ENCODE measurements at regions of chr2 and their contacts with region 1.

Region 1: DNA sequence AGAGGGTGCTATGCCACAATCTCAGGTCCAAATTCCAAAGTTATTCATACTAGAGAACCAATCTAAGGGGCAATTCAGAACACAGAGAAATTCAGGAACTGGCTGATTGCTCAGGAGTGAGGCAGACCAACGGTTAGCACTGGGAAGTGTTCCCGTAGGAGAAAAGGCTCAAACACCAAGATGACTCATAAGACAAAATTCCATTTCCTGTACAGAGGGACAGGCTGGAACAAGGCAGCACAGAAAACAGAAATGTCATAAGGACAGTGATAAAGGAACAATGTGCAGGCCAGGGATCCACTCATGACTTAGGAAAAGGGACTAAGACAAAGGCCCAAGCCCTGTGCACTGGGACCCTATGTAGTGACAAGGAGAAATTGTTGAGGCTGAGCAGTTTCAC is 54.2 kb downstream of the PDE1A start:
- DNase-seq: no peak
- ATAC-seq: no peak
- H3K4me3 ChIP-seq: no peak overlapping the region
- H3K4me3 Mint-ChIP-seq: no peak overlapping the region
- H3K27ac ChIP-seq: no peak overlapping the region
- H3K27ac Mint-ChIP-seq: no peak overlapping the region
- H3K4me1 ChIP-seq: no peaks in the 10 kb centered on the region
- H3K4me1 Mint-ChIP-seq: no peaks in the 10 kb centered on the region
- H3K27me3 ChIP-seq: no peaks in the 10 kb centered on the region
- H3K27me3 Mint-ChIP-seq: peaks cover 0 to 3% (median 0%) of the 10 kb centered on the region in 5 donors

Region 2: DNA sequence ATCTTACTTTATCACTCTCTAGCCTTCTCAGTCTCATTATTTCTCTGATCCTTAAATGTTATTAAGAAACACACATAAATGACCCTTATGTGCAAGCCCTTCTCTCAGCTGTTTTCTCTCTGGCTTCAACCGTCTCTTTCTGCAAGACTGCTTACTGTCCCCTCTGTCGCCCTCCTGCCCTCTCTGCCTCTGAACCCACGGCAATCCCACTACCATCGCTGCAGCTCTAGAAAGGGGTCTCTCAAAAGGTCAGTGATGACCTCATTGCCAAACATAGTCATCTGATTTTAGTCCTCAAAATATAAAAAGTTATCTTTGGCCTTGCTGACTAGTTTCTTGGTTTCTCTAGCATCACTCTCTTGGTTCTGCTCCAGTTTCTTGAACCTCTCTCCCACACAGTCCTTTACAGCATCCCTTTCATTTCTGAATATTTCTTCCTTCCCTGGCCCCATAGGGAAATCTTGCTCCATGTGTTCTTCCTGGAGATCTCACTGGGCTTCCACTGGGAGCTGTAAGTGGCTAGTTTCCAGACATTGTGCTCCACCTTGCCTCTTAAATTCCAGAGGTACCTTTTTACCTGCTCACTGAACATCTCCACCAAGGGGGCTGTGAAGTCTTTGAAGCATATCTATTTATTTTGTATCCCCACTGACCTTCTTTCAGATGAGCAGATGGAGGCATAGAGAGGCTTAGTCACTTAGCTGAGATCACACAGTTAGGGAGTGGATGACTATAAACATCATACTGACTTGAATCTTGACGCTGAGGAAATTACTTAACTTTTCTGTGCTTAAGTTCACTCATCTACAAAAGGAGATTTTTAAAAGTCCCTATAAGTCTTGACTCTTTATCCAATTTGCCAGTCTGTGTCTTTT is 42.0 kb before region 1 on chr2:
- CTCF ChIA-PET with region 1: no interaction called
- POLR2A ChIA-PET with region 1: no interaction called
- intact Hi-C with region 1: loop called in 1 of 2 experiments (anchors 1 kb)
- DNase-seq: no peak
- ATAC-seq: no peak
- H3K4me3 ChIP-seq: no peak overlapping the region
- H3K4me3 Mint-ChIP-seq: no peak overlapping the region
- H3K27ac ChIP-seq: no peak overlapping the region
- H3K27ac Mint-ChIP-seq: no peak overlapping the region
- H3K4me1 ChIP-seq: no peaks in the 10 kb centered on the region
- H3K4me1 Mint-ChIP-seq: no peaks in the 10 kb centered on the region
- H3K27me3 ChIP-seq: no peaks in the 10 kb centered on the region
- H3K27me3 Mint-ChIP-seq: peaks cover 0 to 8% (median 0%) of the 10 kb centered on the region in 5 donors

Measured in naive thymus-derived CD4-positive, alpha-beta T cell (primary cell).